Right ventricle myocardium inferior (tissue), 1 donor: ENCODE measurements at regions of chr22 and their contacts with region 1.

Region 1: GRCh38 chr22:17950651-17951214 is 73.6 kb downstream of the MICAL3 start:
- DNase-seq: no peak
- ATAC-seq: peak; percentile 62

Region 2: GRCh38 chr22:17808693-17809403 is 141.9 kb before region 1 on chr22:
- intact Hi-C with region 1: no loop called
- DNase-seq: no peak
- ATAC-seq: no peak

Region 3: DNA sequence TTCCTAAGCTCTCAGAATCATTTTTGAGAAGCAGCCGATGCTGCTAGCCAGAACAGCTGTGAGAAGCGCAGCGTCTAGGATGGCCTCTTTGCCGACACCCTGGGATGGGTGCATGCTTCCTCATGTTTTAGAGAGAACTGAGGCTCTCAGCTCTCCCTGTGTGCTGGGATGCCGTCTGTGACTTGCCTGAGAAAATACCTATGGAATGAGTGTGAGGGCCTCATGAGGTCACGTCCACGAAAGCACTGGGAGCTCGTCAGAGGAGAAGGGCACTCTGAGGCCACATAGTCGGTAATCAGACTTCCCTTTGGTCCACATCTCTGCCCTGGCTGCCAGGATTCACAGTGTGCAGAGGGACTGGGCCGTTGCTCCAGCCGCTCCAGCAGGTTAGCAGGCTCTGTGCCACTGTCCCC is 19.0 kb after region 1 on chr22:
- intact Hi-C with region 1: loop called (anchors 1 kb)
- DNase-seq: no peak
- ATAC-seq: peak; percentile 85